WTC11 (cell line): ENCODE measurements at regions of chr1 and their contacts with region 1.

Region 1: DNA sequence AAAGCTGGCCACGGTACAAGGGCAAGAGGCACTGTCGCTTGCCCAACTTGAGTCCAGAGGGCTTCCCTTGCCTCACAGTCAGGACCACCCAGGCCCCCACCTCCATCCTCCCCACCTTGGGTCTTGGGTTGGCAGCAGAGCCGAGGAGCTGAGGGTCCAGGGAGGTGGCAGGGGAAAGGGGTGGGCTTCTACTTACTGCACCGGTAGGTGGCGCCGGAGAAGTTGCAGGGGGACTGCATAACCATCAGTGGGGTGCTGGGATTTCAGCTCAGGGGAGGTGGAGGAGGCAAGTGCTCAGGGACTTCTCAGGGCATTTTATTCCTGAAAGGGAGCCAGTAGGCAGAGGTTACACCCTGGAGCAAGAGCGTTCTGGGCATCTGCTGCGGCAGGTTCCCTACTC is 44.0 kb downstream of the TRIM62 start:
- DNase-seq: peak; percentile 86
- ATAC-seq: peak; percentile 68
- H3K4me3 Mint-ChIP-seq: no peak overlapping the region
- H3K27ac Mint-ChIP-seq: no peak overlapping the region
- H3K4me1 Mint-ChIP-seq: peaks cover 49% of the 10 kb centered on the region
- H3K27me3 Mint-ChIP-seq: no peaks in the 10 kb centered on the region
- CTCF ChIP-seq: peak; percentile 61

Region 2: DNA sequence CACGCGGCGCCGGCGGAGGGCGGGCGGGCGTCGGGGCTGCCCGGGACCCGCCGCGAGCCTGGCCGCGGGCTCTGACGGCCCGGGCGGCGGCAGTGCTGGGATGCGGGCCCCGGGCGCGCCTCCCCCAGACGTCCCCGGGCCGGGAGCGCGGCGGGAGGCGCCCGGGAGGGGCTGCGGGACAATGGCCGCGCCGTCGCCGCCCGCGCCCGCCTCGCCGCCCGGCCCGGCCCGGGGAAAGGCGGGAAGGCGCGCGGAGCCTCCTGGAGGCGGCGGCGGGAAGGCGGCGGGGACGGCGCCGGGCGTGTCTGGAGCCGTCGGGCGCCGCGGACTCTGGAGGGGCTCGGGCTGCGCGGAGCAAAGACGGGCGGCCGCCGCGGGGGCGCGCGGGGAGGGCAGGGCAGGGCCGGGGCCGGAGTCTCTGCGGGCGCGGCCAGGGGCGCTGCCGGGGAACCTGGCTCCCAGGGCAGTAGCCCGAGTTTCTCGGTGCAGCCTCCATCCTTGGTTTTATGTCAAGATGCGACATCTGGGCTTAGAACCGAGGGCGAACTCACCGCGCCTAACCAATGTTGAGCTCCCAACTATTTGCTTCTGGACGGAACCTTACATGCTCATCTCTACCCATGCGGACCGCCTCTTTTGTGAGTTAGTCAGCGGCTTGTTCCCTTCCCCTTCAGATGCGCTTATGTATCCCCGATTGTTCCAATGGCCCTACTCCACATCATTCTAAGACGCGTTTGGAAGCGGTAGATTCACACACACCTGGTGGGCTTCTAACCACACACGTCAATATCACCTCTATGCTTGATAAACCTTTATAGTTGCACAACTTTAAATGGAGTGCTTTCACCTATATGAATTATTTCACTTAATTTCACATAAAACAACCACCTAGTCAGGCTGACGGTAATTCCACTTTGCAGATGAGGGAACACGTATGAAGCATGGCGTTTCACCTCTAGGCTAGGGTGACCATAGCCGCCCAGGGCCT is 597.9 kb before region 1 on chr1:
- CTCF ChIA-PET with region 1: no interaction called
- POLR2A ChIA-PET with region 1: no interaction called
- DNase-seq: peak; percentile 54
- ATAC-seq: peak; percentile 71
- H3K4me3 Mint-ChIP-seq: peak overlapping the region; percentile 85
- H3K27ac Mint-ChIP-seq: peak overlapping the region; percentile 19; the same call in 1 of the 2 replicates
- H3K4me1 Mint-ChIP-seq: peaks cover 20% of the 10 kb centered on the region
- H3K27me3 Mint-ChIP-seq: peaks cover 23% of the 10 kb centered on the region
- CTCF ChIP-seq: no peak

Region 3: DNA sequence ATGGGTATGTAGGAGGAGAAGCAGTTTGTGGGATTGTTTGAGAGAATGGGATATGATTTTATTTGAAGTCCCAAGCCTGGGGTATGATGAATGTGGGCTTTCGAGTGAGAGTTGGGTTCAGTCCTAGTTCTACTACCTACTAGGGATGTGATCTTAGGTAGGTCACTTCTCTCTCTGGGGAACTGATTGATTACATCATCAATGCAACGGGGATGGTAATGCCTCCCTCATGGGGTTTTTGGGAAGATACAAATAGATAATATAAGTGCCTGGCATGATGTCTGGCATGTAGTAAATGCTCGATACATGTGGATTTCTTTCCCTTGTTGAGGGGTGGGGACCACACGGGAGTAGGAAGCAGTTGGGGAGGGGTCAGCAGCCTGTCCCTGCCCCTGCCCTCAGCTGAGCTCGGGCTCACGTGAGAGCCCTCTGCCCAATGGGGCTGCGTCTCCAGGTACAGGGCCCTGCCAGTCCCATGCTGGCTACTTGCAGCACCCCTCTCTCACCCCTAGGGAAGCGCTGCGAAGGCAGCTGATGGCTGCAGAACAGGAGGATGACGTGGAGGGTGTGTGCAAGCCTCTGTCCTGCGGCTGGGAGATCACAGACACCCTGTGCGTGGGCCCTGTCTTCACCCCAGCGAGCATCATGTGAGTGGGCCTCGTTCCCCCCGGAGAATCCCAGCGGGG is 18.1 kb before region 1 on chr1:
- CTCF ChIA-PET with region 1: interaction called, 117 read pairs
- POLR2A ChIA-PET with region 1: no interaction called
- DNase-seq: peak; percentile 69
- ATAC-seq: peak; percentile 99
- H3K4me3 Mint-ChIP-seq: no peak overlapping the region
- H3K27ac Mint-ChIP-seq: no peak overlapping the region
- H3K4me1 Mint-ChIP-seq: no peaks in the 10 kb centered on the region
- H3K27me3 Mint-ChIP-seq: peaks cover 66% of the 10 kb centered on the region
- CTCF ChIP-seq: no peak

Region 4: GRCh38 chr1:33152685-33153432 is 15.1 kb after region 1 on chr1:
- CTCF ChIA-PET with region 1: interaction called, 83 read pairs
- POLR2A ChIA-PET with region 1: interaction called, 3 read pairs
- DNase-seq: peak; percentile 78
- ATAC-seq: peak; percentile 87
- H3K4me3 Mint-ChIP-seq: peak overlapping the region; percentile 7; the same call in 1 of the 2 replicates
- H3K27ac Mint-ChIP-seq: peak overlapping the region; percentile 93
- H3K4me1 Mint-ChIP-seq: peaks cover 47% of the 10 kb centered on the region
- H3K27me3 Mint-ChIP-seq: no peaks in the 10 kb centered on the region; the same call in 1 of the 2 replicates
- CTCF ChIP-seq: no peak

Region 5: DNA sequence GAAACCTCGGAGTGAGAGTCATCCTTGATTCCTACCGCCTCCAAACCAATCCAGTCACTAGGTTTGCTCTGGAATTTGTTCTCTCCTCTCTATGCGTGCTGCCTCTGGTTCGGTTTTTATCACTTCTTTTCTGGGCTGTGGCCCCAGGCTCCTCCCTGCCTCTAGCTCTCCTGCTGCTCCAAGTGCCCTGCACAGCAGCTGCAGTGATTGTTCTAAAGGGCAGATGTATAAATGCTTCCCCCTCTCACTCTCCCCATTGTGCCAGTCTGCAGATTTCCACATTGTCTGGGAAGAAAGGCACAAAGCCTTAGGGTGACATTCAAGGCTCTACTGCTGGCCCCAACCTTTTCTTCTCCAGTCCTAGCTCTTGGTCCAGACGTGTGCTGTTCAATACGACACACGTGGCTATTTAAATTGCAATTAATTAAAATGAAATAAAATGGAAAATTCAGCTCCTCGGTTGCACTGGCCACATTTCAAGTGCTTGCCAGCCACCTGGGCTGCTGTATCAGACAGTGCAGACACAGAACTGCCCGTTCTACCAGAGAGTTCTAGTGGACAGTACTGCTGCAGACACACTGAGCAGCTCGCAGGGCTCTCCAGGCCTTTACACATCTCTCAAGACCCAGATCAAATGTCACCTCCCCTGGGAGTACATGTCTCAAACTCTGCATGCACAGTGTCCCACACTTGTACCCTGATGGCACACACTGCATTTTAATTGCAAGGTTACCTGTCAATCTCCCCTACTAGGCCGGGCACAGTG is 31.7 kb after region 1 on chr1:
- CTCF ChIA-PET with region 1: interaction called, 17 read pairs
- POLR2A ChIA-PET with region 1: no interaction called
- DNase-seq: no peak
- ATAC-seq: no peak
- H3K4me3 Mint-ChIP-seq: no peak overlapping the region
- H3K27ac Mint-ChIP-seq: peak overlapping the region; percentile 27; the same call in 1 of the 2 replicates
- H3K4me1 Mint-ChIP-seq: peaks cover 46% of the 10 kb centered on the region
- H3K27me3 Mint-ChIP-seq: no peaks in the 10 kb centered on the region; the same call in 1 of the 2 replicates
- CTCF ChIP-seq: no peak

Region 6: DNA sequence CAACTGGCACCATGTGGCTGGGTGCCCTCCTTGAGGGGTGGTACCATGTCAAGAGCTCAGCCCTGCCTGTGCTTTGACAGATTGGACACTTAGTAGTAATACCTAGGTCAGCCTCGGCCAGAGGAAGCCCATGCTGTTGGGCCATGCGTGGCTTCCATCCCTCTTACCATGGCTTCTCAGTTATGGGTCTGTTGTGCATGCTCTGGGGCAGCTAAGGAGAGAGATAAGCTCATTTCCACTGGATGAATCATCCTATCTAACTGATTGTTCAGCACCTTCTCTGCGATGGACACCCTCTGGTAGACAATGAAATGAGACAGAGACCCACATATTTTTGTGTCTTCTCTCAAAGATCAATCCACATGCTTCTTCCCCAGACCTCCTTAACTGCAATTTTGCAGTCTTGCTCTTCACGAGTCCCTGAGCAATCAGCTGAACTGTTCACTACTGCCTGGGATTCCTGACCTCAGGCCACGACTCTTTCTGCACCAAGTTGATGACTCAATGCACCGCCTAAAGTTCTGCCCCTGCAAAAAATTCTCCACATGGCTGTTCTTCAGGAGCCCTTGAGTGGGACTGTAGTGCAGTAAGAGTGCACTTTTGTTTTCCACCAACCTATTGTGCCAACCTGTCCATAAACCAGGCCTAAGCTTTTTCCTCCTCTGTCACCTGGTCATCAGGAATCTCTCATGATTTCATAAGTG is 50.9 kb after region 1 on chr1:
- CTCF ChIA-PET with region 1: interaction called, 12 read pairs
- POLR2A ChIA-PET with region 1: no interaction called
- DNase-seq: no peak
- ATAC-seq: no peak
- H3K4me3 Mint-ChIP-seq: no peak overlapping the region
- H3K27ac Mint-ChIP-seq: no peak overlapping the region
- H3K4me1 Mint-ChIP-seq: no peaks in the 10 kb centered on the region
- H3K27me3 Mint-ChIP-seq: peaks cover 50% of the 10 kb centered on the region
- CTCF ChIP-seq: no peak

Region 7: DNA sequence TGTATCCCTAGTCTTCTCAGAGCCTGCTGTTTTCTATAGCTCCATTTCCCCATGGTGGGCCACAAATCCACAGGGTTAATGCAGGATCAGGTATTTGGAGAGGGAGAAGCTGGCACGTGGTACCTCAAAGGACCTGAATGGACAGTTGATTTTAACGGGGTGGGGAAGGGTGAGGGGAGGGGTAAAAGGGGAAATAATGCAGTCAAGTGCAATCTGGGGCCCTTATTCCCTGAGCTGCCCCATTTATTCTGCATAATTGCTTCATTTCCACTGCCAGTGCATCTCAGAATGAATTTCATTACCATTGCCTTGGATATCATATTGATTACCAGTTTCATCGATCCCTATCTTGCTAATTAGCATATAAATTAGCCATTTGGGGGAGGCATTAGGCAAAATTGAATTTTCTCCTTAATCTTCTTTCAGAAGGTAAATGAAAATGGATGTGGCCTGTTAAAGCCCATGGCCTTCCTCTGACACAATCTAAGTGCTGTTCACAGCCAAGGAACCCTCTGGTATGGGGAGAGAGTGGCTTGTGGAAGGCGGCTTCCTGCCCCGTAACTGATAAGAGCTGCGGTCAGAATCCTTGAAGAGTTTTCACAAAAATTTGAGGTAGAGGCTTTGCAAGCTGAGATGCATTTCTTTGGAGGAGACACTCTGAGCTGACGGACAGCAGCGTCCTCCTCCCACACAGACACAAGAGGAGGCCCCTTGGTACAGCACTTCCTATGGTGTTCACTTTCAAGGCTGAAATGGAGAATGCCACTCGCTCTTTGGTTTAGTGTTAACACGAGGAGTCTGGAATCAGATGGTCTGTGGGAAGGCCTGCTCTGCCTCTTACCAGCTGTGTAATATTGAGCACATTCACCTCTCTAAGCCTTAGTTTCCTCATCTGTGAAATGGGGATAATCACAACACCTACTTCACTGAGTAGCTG is 258.7 kb after region 1 on chr1:
- CTCF ChIA-PET with region 1: no interaction called
- POLR2A ChIA-PET with region 1: no interaction called
- DNase-seq: no peak
- ATAC-seq: no peak
- H3K4me3 Mint-ChIP-seq: no peak overlapping the region
- H3K27ac Mint-ChIP-seq: no peak overlapping the region
- H3K4me1 Mint-ChIP-seq: peaks cover 20% of the 10 kb centered on the region
- H3K27me3 Mint-ChIP-seq: peaks cover 2% of the 10 kb centered on the region; the same call in 1 of the 2 replicates
- CTCF ChIP-seq: no peak